GM10248 (cell line): ENCODE measurements at regions of chr3 and their contacts with region 1.

Region 1: GRCh38 chr3:73432023-73432705 is 192.6 kb downstream of the PDZRN3 start:
- DNase-seq: peak; percentile 53
- CTCF ChIP-seq: peak; percentile 56

Region 2: DNA sequence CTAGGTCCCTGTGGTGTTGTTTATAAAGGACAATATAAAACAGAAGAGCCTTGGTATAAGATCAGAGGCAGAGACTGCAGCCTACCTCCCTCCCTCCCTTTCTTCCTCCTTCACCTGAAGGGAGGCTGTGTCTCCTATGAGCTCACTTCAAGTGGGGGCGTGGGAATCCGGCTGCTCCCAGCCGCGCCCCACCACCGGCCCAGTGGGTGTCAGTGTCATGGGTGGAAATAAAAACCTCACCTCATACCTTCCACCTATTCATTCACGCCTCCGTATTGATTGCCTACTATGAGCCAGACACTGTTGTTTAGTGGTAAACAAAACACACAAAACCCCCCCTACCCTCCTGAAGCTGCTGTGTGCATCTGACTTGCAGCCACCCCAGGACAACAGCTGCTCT is 10.7 kb after region 1 on chr3:
- CTCF ChIA-PET with region 1: interaction called, 22 read pairs
- POLR2A ChIA-PET with region 1: no interaction called
- DNase-seq: no peak
- CTCF ChIP-seq: no peak

Region 3: GRCh38 chr3:73448761-73449301 is 16.7 kb after region 1 on chr3:
- CTCF ChIA-PET with region 1: interaction called, 22 read pairs
- POLR2A ChIA-PET with region 1: no interaction called
- DNase-seq: peak; percentile 49
- CTCF ChIP-seq: no peak

Region 4: GRCh38 chr3:73827725-73828211 is 395.6 kb after region 1 on chr3:
- CTCF ChIA-PET with region 1: no interaction called
- POLR2A ChIA-PET with region 1: no interaction called
- DNase-seq: no peak
- CTCF ChIP-seq: no peak